ENCODE measurements at regions of chr11 and their contacts with region 1.

Region 1: DNA sequence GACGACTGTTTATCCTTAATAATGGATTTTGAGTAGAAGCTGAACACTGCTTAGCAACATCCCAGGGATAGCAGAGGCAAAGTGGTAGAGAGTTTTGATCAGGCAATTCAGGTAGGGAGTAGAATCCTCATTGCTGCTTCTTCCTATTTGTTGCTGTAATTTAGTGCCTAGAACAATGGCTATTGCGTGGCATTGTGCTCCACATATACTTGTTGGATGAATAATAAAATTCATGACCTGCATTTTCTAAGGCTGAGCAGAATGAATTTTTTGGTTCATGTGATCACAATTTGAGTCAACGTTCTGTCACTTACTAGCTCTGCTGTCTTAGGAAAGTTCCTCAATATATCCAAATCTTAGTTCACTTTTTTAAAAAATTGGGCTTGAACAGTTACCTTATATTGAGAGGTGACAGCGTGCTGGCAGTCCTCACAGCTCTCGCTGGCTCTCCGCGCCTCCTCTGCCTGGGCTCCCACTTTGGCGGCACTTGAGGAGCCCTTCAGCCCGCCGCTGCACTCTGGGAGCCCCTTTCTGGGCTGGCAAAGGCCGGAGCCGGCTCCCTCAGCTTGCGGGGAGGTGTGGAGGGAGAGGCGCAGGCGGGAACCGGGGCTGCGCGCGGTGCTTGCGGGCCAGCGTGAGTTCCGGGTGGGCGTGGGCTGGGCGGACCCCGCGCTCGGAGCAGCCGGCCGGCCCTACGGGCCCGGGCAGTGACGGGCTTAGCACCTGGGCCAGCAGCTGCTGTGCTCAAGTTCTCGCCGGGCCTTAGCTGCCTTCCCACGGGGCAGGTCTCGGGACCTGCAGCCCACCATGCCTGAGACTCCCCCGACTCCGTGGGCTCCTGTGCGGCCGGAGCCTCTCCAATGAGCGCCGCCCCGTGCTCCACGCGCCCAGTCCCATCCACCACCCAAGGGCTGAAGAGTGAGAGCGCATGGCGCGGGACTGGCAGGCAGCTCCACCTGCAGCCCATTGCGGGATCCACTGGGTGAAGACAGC is 350.6 kb downstream of the ETS1 start:
- DNase-seq: no peak
- H3K4me3 ChIP-seq: no peak overlapping the region
- H3K4me3 Mint-ChIP-seq: no peak overlapping the region
- H3K27ac ChIP-seq: no peak overlapping the region
- H3K27ac Mint-ChIP-seq: no peak overlapping the region
- H3K4me1 ChIP-seq: no peaks in the 10 kb centered on the region
- H3K4me1 Mint-ChIP-seq: peaks cover 14 to 19% (median 17%) of the 10 kb centered on the region in 3 donors
- H3K27me3 ChIP-seq: no peaks in the 10 kb centered on the region
- H3K27me3 Mint-ChIP-seq: no peaks in the 10 kb centered on the region

Region 2: GRCh38 chr11:128707681-128708080 is 470.9 kb after region 1 on chr11:
- CTCF ChIA-PET with region 1: no interaction called
- POLR2A ChIA-PET with region 1: interaction called, 18 read pairs
- DNase-seq: no peak
- H3K4me3 ChIP-seq: no peak overlapping the region
- H3K4me3 Mint-ChIP-seq: peak overlapping the region in 2 of 7 donors; percentile 3 to 8
- H3K27ac ChIP-seq: no peak overlapping the region
- H3K27ac Mint-ChIP-seq: peak overlapping the region in 7 of 8 donors; percentile 4 to 82 (median 53)
- H3K4me1 ChIP-seq: peaks cover 92% of the 10 kb centered on the region
- H3K4me1 Mint-ChIP-seq: peaks cover 93 to 100% (median 99%) of the 10 kb centered on the region in 3 donors
- H3K27me3 ChIP-seq: no peaks in the 10 kb centered on the region
- H3K27me3 Mint-ChIP-seq: no peaks in the 10 kb centered on the region

Measured in CD8-positive, alpha-beta memory T cell (primary cell).